Mammary epithelial cell (primary cell): ENCODE measurements at regions of chr3 and their contacts with region 1.

Region 1: DNA sequence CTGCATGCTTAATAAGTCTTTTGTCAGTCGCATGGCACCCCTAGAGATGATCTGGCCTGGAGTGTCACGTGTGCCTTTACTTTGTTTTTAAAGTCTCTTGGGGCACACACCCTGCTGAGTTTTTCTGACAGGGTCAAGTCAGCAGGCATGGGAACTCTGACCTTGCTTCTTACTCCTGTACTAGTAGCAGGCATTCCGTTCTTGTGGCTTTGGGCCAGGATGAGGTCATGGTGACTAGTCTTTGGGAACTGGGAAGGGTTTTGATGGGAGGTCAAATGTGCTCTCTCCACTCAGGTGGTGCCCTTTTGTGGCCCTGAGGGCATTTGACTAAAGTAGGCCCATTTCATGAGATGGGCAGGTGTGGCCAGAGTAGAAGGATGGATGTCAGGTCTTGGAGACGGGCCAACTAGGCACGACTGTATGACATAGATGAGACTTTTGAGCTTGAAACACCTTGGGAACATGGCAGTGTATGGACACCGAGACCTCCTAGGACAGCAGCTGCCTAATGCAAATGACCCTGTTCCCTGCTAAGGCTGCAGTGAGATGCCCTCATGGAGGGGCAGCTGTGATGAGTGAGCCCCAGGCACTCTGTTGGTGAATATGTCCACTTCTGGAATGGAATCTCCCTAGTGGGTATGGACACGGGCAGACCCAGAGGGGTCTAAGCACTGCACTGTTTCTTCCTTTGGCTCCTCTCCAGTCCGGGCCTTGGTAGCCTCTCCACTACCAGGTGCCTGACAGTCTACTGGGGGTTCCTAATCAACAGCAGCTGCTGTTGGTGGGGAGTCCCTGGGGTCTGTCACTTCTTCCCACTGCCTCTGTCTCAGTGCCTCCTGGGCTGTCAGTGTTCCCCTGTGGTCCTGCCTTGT is 16.4 kb downstream of the SRPRB start:
- DNase-seq: peak; percentile 89
- H3K4me3 ChIP-seq: no peak overlapping the region
- H3K27ac ChIP-seq: no peak overlapping the region
- H3K4me1 ChIP-seq: peaks cover 36% of the 10 kb centered on the region
- H3K27me3 ChIP-seq: no peaks in the 10 kb centered on the region
- CTCF ChIP-seq: peak; percentile 41 to 53

Region 2: DNA sequence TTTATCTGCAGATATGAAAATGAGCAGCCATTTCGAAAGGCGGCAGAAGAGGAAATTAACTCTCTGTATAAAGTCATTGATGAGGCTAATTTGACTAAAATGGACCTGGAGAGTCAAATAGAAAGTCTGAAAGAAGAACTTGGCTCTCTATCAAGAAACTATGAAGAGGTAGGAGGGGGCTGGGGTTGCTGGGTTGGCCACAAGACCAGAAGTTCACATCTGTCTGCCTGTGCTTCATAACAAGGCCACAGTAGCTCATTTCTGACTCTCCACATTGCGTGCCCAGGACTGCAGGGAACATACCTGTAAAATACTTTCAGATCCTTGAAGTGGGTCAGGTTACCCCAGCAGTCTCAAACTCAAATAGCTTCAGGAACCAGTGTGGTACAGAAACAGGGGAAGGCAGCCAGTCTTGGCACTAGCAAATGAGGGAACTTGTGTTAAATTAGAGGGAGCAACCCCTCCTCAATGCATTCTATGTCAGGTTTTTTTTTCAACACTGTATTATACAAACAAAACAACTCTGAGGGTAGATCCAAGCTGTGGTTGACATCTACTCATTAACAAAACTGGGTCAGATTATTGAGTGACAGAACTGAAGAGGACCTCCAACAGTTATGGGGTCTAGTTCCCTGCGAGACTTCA is 373.4 kb before region 1 on chr3:
- CTCF ChIA-PET with region 1: no interaction called
- dilution Hi-C with region 1: no loop called
- in situ Hi-C with region 1: no loop called
- intact Hi-C with region 1: loop called (anchors 5 kb)
- DNase-seq: no peak
- H3K4me3 ChIP-seq: no peak overlapping the region
- H3K27ac ChIP-seq: no peak overlapping the region
- H3K4me1 ChIP-seq: peaks cover 11% of the 10 kb centered on the region
- H3K27me3 ChIP-seq: no peaks in the 10 kb centered on the region
- CTCF ChIP-seq: no peak

Region 3: GRCh38 chr3:133591271-133591742 is 230.7 kb before region 1 on chr3:
- CTCF ChIA-PET with region 1: no interaction called
- dilution Hi-C with region 1: no loop called
- in situ Hi-C with region 1: no loop called
- intact Hi-C with region 1: loop called (anchors 5 kb)
- DNase-seq: peak; percentile 20
- H3K4me3 ChIP-seq: no peak overlapping the region
- H3K27ac ChIP-seq: no peak overlapping the region
- H3K4me1 ChIP-seq: peaks cover 41% of the 10 kb centered on the region
- H3K27me3 ChIP-seq: no peaks in the 10 kb centered on the region
- CTCF ChIP-seq: no peak

Region 4: DNA sequence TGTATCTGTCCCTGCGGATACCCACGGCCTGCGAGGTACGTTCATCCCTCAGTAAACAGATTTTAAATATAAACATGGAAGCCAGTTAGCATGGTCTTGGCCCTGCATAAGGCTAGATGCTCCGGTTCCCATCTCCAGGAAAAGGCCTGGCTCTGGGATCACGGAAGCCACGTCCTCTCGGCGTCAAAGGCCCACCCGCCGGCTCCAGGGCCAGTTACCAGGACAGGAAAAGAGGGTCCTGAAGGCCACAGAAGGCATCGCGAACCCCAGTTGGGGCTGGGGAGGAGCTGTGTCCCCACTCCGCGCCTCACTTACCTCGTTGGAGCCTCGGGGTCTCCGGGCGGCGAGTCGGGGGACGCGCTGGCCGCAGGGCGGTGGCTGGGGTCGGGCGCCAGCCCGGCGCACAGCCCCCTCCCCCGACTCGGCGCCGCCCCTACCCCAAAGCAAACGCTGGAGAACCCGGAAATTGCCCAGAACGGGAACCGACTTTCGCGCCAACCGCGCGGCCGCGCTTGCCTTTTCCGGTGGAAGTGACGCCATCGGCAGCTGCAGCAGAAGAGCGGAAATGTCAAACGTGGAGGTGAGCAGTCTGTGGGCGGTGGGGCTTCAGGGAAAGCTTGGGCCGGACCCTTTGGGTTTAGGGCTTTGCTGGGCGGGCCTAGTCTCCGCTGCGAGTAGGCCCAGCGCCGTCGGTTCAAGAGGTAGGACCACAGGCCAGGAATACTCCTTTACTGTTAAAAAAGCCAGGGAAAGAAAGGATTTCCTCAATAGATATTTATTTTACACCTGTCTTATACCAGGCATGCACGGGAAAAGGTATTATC is 160.3 kb before region 1 on chr3 and contains the start of gene TOPBP1:
- CTCF ChIA-PET with region 1: no interaction called
- dilution Hi-C with region 1: no loop called
- in situ Hi-C with region 1: loop called in 1 of 2 experiments (anchors 10 kb)
- intact Hi-C with region 1: loop called (anchors 1 kb)
- DNase-seq: peak; percentile 68
- H3K4me3 ChIP-seq: peak within 1 kb of the TSS; percentile 54 to 93 (median 90)
- H3K27ac ChIP-seq: peak within 1 kb of the TSS; percentile 86
- H3K4me1 ChIP-seq: peaks cover 27% of the 10 kb centered on the region
- H3K27me3 ChIP-seq: no peaks in the 10 kb centered on the region
- CTCF ChIP-seq: no peak
- total RNA-seq, gene TOPBP1: 23.9 to 25.8 TPM